Activated CD8-positive, alpha-beta T cell treated with anti-CD3 and anti-CD28 coated beads, Interleukin-2, amount 10 ng/mL, durations not matched to agents 7 days and 5 days (primary cell): ENCODE measurements at regions of chr15 and their contacts with region 1.

Region 1: DNA sequence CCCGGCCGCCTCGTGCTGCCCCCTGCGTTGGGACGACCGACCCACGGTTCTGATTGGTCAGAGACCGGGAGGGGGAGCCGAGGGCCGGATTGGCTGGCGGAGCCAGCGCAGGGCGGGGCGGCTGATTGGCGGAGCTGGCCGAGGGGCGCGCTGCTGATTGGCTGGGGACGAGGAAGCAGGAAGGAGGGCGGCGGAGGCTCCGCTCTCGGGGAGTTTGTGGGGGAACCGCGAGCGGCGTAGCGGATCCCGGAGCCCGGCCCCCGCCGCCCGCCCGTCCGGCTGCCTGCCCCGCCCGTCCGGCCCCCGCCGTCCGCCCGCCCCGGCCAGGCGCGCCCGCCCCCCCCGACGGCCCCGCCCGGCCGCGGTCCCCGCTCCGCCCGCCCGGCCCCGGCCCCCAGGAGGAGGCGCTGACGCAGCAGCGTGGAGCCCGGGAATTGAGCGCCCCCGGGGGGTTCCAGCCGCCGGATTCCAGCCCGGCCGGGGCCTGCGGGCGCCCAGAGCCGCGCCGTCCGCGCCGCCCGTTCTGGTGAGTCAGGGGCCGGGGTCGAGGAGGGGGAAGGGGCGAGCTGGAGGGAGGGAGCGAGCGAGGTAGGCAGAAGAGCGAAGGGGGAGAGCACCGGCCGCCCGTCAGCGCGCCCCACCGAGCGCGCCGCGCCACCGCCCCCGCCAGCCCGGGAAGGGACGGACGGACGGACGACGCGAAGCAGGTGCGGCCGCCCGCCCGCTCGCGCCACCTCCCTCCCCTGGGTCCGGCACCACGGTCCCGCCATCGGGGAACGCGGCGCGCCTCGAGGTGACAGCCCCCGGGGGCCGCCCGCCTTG is at the start of gene BAHD1:
- DNase-seq: peak; percentile 97
- ATAC-seq: peak; percentile 92
- H3K4me3 Mint-ChIP-seq: peak within 1 kb of the TSS; percentile 93
- H3K27ac Mint-ChIP-seq: peak within 1 kb of the TSS; percentile 83
- H3K4me1 Mint-ChIP-seq: peaks cover 40% of the 10 kb centered on the region
- H3K27me3 Mint-ChIP-seq: peaks cover 42% of the 10 kb centered on the region
- total RNA-seq, gene BAHD1: 25.7 to 26.3 TPM

Region 2: GRCh38 chr15:40232625-40233070 is 208.3 kb before region 1 on chr15:
- CTCF ChIA-PET with region 1: no interaction called
- POLR2A ChIA-PET with region 1: no interaction called
- DNase-seq: no peak
- ATAC-seq: no peak
- H3K4me3 Mint-ChIP-seq: no peak overlapping the region
- H3K27ac Mint-ChIP-seq: no peak overlapping the region
- H3K4me1 Mint-ChIP-seq: peaks cover 2% of the 10 kb centered on the region
- H3K27me3 Mint-ChIP-seq: peaks cover under 1% of the 10 kb centered on the region

Region 3: GRCh38 chr15:40454904-40455391 is 14.0 kb after region 1 on chr15:
- CTCF ChIA-PET with region 1: interaction called, 19 read pairs
- POLR2A ChIA-PET with region 1: interaction called, 24 read pairs
- DNase-seq: no peak
- ATAC-seq: no peak
- H3K4me3 Mint-ChIP-seq: peak overlapping the region; percentile 74
- H3K27ac Mint-ChIP-seq: peak overlapping the region; percentile 96
- H3K4me1 Mint-ChIP-seq: peaks cover 73% of the 10 kb centered on the region
- H3K27me3 Mint-ChIP-seq: no peaks in the 10 kb centered on the region

Region 4: GRCh38 chr15:40506964-40507571 is 66.1 kb after region 1 on chr15:
- CTCF ChIA-PET with region 1: interaction called, 15 read pairs
- POLR2A ChIA-PET with region 1: no interaction called
- DNase-seq: peak; percentile 74
- ATAC-seq: peak; percentile 90
- H3K4me3 Mint-ChIP-seq: peak overlapping the region; percentile 13
- H3K27ac Mint-ChIP-seq: no peak overlapping the region
- H3K4me1 Mint-ChIP-seq: peaks cover 24% of the 10 kb centered on the region
- H3K27me3 Mint-ChIP-seq: peaks cover 53% of the 10 kb centered on the region

Region 5: GRCh38 chr15:40974879-40975278 is 533.9 kb after region 1 on chr15:
- CTCF ChIA-PET with region 1: no interaction called
- POLR2A ChIA-PET with region 1: no interaction called
- DNase-seq: no peak
- ATAC-seq: no peak
- H3K4me3 Mint-ChIP-seq: no peak overlapping the region
- H3K27ac Mint-ChIP-seq: no peak overlapping the region
- H3K4me1 Mint-ChIP-seq: no peaks in the 10 kb centered on the region
- H3K27me3 Mint-ChIP-seq: no peaks in the 10 kb centered on the region